AG04449 (cell line): ENCODE measurements at regions of chr9 and their contacts with region 1.

Region 1: DNA sequence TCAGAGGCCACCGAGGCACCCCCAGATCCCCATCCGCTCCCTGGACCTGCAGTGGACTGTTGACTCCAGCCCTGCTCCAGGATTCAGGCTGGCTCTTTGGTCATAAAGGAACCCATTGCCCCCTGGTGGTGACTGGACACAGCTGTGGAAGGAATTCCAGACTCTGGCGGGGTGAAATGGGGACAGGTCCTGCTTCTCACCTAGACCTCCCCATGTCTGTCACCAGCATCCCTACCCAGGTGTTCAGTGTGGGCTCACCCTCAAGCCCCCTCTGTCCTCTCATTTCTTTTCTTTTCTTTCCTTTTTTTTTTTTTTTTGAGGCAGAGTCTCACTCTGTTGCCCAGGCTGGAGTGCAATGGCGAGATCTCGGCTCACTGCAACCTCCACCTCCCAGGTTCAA is 25.5 kb upstream of the STXBP1 start:
- DNase-seq: no peak
- H3K4me3 ChIP-seq: no peak overlapping the region
- CTCF ChIP-seq: peak; percentile 92

Region 2: DNA sequence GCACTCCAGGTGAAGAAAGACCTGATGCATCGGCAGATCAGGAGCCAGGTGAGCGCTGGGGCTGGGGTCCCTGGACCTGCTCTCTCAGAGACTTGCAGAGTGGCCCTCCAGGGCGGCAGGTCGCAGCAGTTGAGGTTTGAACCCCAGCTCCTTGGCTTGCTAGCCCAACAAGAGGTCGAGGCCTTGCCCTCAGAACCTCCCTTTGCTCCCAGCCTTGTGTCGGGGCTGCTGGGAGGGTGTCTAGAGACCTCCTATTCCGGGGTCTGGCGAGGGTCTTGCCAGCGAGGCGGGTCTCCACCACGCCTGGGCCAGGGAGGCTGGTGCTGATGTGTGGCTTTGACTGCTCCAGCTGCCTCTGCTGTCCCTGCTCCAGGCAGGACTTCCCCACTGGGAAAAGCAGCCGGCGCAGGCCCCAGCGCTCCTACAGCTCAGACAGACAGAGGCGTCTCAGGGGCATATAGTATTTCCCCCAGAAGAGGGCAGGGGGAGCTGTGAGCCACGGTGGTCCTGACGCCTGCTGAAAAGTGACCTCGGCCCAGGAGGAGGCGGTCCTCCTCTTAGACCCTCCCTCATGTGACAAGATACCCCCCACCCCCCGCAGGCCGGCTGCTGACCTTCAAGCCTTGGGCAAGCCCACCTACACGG is 96.9 kb before region 1 on chr9:
- CTCF ChIA-PET with region 1: interaction called, 17 read pairs
- POLR2A ChIA-PET with region 1: no interaction called
- DNase-seq: no peak
- H3K4me3 ChIP-seq: no peak overlapping the region
- CTCF ChIP-seq: no peak

Region 3: GRCh38 chr9:127514468-127514867 is 72.1 kb before region 1 on chr9:
- CTCF ChIA-PET with region 1: interaction called, 322 read pairs
- POLR2A ChIA-PET with region 1: interaction called, 3 read pairs
- DNase-seq: no peak
- H3K4me3 ChIP-seq: no peak overlapping the region
- CTCF ChIP-seq: no peak

Region 4: DNA sequence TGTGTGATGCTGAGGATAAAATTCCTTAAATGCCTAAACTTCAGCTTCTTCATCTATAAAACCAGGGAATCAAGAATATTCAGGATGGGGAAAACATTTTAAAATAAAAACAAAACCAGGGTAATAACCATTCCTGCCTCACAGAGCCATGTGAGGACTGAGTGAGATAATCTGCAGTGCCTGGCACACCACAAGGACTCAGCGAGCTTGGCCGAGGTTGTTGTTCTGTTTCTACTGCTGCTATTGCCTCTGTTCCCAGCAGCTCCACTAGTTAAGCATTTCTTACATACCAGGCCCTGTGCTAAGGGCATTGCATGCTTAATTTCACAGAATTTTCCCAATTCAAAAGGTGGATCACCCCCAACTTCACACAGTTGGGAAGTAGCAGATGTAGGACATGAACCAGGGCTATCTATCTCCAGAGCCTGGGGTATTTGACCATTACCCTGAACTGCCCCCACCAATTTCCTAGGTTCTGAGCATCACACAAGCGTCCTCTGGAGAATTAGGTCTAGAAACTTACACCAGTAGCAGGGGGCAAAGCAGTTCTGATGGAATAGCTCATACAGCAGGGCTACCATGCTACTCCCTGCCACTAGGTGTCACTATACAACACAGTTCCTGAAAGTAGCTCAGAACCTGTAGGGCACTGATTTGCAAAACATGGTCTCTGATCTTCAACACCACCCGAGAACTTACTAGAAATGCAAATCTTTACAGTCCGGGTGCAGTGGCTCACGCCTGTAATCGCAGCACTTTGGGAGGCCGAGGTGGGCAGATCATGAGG is 60.9 kb before region 1 on chr9:
- CTCF ChIA-PET with region 1: interaction called, 57 read pairs
- POLR2A ChIA-PET with region 1: interaction called, 5 read pairs
- DNase-seq: no peak
- H3K4me3 ChIP-seq: no peak overlapping the region
- CTCF ChIP-seq: peak; percentile 62

Region 5: DNA sequence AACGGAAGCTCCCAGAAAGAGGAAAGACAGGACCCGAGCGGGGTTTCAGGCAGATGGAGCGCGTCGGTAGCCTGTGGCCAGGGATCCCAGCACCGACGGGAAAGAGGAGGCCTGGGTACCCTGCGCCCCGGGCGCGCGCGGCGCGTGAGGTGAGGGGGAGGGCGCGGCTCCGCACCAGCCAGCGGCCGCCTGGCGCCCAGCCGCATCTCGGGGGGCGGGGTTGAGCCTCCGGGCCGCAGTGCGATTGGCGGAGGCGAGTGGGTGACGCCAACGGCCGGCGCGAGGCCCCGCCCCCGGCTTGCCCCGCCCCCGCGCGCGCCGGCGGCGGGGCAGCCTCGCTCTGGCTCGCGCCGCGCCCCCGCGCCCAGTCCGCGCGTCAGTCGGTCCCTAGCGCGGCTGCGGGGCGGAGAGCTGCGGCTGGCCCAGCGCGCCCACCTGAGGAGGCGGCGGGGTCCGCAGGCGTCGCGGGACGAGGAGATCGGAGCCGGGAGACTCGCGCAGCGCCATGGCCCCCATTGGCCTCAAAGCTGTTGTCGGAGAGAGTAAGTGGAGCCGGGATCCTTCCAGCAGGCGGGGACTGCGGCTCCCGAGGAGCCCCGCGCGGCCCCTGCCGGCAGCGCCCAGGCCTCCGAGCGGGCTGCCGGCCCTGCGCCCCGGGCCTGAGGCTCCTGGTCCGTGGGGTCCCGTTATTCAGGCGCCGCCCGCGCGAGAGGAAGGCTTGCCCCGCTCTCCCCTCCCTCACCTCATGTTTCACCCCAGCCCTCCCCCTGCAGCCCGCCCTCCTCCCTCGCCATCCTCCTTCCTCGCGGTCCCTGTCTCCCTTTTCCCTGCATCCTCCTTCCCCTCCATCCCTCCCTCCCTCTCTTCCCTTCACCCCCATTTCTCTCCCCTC is 25.6 kb after region 1 on chr9 and contains the start of gene STXBP1:
- CTCF ChIA-PET with region 1: interaction called, 175 read pairs
- POLR2A ChIA-PET with region 1: no interaction called
- DNase-seq: no peak
- H3K4me3 ChIP-seq: peak within 1 kb of the TSS; percentile 79
- CTCF ChIP-seq: peak; percentile 32

Region 6: DNA sequence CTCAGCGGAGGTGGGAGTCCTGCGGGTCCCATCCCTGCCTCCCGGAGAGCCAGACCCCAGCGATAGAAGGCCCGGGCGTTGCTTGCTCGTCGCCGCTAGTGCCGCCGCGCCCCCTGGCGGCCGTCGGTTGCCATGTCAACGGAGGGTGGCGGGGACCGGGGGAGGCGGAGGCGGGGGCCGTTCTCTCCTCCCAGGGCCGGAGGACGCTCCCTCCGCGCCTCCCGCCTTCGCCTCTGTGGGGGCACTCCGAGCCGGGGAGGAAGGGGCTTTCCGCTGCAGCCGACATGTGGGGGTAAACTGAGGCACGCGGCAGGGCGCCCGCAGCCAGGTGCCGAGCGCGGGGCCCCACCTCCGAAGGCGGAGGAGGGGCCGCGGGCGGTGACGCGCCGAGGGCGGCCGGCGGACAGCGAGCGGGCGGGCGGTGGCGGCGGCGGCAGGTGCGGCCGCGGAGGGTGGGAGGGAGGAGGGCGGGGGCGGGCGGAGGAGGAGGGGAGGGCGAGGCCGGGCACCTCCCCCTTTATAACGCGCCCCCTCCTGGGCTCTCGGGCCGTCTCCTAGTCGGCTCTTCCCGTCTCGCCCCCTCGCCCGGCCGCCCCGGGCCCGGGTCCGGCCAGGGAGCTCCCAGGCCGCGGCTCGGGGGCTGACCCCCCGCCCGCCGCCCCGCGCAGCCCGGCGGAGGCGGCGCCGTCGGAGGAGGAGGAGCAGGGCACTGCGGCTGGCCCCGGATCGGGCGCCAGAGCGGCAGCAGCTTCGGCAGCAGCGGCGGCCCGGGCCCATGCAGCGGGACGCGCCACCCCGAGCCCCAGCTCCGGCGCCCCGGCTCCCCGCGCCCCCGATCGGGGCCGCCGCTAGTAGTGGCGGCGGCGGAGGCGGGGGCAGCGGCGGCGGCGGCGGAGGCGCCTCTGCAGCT is 198.7 kb after region 1 on chr9:
- CTCF ChIA-PET with region 1: interaction called, 28 read pairs
- POLR2A ChIA-PET with region 1: no interaction called
- DNase-seq: no peak
- H3K4me3 ChIP-seq: peak overlapping the region; percentile 88
- CTCF ChIP-seq: peak; percentile 87